Mammary epithelial cell (primary cell): ENCODE measurements at regions of chr7 and their contacts with region 1.

Region 1: GRCh38 chr7:80918909-80919662 is at the start of gene SEMA3C:
- DNase-seq: peak; percentile 97
- H3K4me3 ChIP-seq: peak within 1 kb of the TSS; percentile 63 to 99 (median 99)
- H3K27ac ChIP-seq: peak within 1 kb of the TSS; percentile 97
- H3K4me1 ChIP-seq: peaks cover 34% of the 10 kb centered on the region
- H3K27me3 ChIP-seq: no peaks in the 10 kb centered on the region
- CTCF ChIP-seq: peak in 1 of 2 donors; percentile 34
- total RNA-seq, gene SEMA3C: 312 to 708 TPM

Region 2: GRCh38 chr7:80428161-80429054 is 490.7 kb before region 1 on chr7:
- CTCF ChIA-PET with region 1: no interaction called
- dilution Hi-C with region 1: no loop called
- in situ Hi-C with region 1: no loop called
- intact Hi-C with region 1: loop called (anchors 10 kb)
- DNase-seq: peak; percentile 62
- H3K4me3 ChIP-seq: no peak overlapping the region
- H3K27ac ChIP-seq: no peak overlapping the region
- H3K4me1 ChIP-seq: no peaks in the 10 kb centered on the region
- H3K27me3 ChIP-seq: no peaks in the 10 kb centered on the region
- CTCF ChIP-seq: peak; percentile 48 to 74

Region 3: GRCh38 chr7:80722616-80723141 is 196.4 kb before region 1 on chr7:
- CTCF ChIA-PET with region 1: no interaction called
- dilution Hi-C with region 1: no loop called
- in situ Hi-C with region 1: no loop called
- intact Hi-C with region 1: loop called (anchors 5 kb)
- DNase-seq: peak; percentile 99
- H3K4me3 ChIP-seq: no peak overlapping the region
- H3K27ac ChIP-seq: peak overlapping the region; percentile 81
- H3K4me1 ChIP-seq: peaks cover 29% of the 10 kb centered on the region
- H3K27me3 ChIP-seq: no peaks in the 10 kb centered on the region
- CTCF ChIP-seq: no peak

Region 4: GRCh38 chr7:80781561-80781979 is 137.5 kb before region 1 on chr7:
- CTCF ChIA-PET with region 1: no interaction called
- dilution Hi-C with region 1: no loop called
- in situ Hi-C with region 1: no loop called
- intact Hi-C with region 1: no loop called
- DNase-seq: peak; percentile 70
- H3K4me3 ChIP-seq: no peak overlapping the region
- H3K27ac ChIP-seq: peak overlapping the region; percentile 12
- H3K4me1 ChIP-seq: peaks cover 60% of the 10 kb centered on the region
- H3K27me3 ChIP-seq: no peaks in the 10 kb centered on the region
- CTCF ChIP-seq: no peak

Region 5: GRCh38 chr7:80941208-80941758 is 22.2 kb after region 1 on chr7:
- CTCF ChIA-PET with region 1: no interaction called
- dilution Hi-C with region 1: no loop called
- in situ Hi-C with region 1: no loop called
- intact Hi-C with region 1: loop called (anchors 1 kb)
- DNase-seq: peak; percentile 93
- H3K4me3 ChIP-seq: no peak overlapping the region
- H3K27ac ChIP-seq: peak overlapping the region; percentile 98
- H3K4me1 ChIP-seq: peaks cover 30% of the 10 kb centered on the region
- H3K27me3 ChIP-seq: no peaks in the 10 kb centered on the region
- CTCF ChIP-seq: no peak

Region 6: GRCh38 chr7:81075150-81075549 is 156.1 kb after region 1 on chr7:
- CTCF ChIA-PET with region 1: interaction called, 3 read pairs
- dilution Hi-C with region 1: no loop called
- in situ Hi-C with region 1: loop called in 1 of 2 experiments (anchors 5 kb)
- intact Hi-C with region 1: loop called (anchors 1 kb)
- DNase-seq: peak; percentile 98
- H3K4me3 ChIP-seq: no peak overlapping the region
- H3K27ac ChIP-seq: peak overlapping the region; percentile 93
- H3K4me1 ChIP-seq: peaks cover 26% of the 10 kb centered on the region
- H3K27me3 ChIP-seq: no peaks in the 10 kb centered on the region
- CTCF ChIP-seq: peak; percentile 26 to 58

Region 7: GRCh38 chr7:81256991-81257390 is 337.9 kb after region 1 on chr7:
- CTCF ChIA-PET with region 1: no interaction called
- dilution Hi-C with region 1: no loop called
- in situ Hi-C with region 1: no loop called
- intact Hi-C with region 1: loop called (anchors 2 kb)
- DNase-seq: no peak
- H3K4me3 ChIP-seq: no peak overlapping the region
- H3K27ac ChIP-seq: no peak overlapping the region
- H3K4me1 ChIP-seq: no peaks in the 10 kb centered on the region
- H3K27me3 ChIP-seq: no peaks in the 10 kb centered on the region
- CTCF ChIP-seq: no peak

Region 8: GRCh38 chr7:81447351-81447952 is 528.4 kb after region 1 on chr7:
- CTCF ChIA-PET with region 1: no interaction called
- dilution Hi-C with region 1: no loop called
- in situ Hi-C with region 1: loop called in 1 of 2 experiments (anchors 10 kb)
- intact Hi-C with region 1: loop called (anchors 1 kb)
- DNase-seq: peak; percentile 66
- H3K4me3 ChIP-seq: no peak overlapping the region
- H3K27ac ChIP-seq: no peak overlapping the region
- H3K4me1 ChIP-seq: no peaks in the 10 kb centered on the region
- H3K27me3 ChIP-seq: no peaks in the 10 kb centered on the region
- CTCF ChIP-seq: peak; percentile 62 to 69